ENCODE measurements at regions of chr1 and their contacts with region 1.

Region 1: DNA sequence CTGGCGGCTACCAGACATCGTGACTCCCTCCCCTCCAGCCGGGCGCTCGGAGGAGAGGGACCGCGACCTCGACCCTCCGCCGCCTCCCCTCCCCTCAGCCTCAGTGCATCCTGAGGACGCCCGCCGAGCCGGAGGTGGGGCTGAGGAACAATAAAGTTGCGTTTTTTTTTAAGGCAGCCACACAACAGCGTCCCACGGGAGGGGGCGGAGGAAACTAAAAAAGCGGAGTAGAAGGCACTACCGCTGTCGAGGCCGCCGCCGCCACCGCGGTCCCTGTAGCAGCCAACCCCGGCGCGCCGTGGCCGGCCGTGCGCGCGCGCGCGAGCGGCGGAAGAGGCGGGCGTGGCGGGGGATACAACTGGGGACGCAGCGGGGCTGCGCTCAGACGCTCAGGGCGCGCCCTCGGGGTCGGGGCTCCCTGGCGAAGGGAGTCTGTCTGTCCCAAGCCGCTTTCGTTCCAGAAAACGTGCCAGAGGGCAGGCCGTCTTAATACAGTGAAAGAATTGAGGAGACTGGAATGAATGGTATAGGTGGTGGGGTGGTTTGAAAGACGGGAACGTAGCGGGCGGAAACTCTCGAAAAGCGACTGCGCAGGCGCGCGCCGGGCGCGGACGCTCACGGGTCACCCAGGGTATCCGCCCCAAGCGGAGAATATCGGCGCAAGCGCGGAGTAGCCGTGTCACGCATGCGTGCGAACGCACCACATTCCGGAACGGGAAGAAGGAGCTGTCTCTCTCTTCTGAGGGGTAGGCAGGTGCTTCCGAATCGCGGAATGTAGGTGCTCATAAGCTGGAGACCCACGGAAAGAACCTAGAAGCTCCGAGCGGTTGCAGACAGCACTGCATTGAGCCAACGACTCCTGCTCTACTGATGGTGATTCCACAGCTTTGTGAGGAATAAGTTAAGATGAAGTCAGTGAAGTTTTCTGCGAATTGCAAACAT is at the start of gene COP1:
- DNase-seq: peak; percentile 97
- H3K4me3 ChIP-seq: peak within 1 kb of the TSS; percentile 96
- H3K27ac ChIP-seq: peak within 1 kb of the TSS; percentile 89
- H3K4me1 ChIP-seq: peaks cover 16% of the 10 kb centered on the region
- H3K27me3 ChIP-seq: no peaks in the 10 kb centered on the region
- CTCF ChIP-seq: no peak
- total RNA-seq, gene COP1: 35.8 and 37.5 TPM in 2 replicates

Region 2: GRCh38 chr1:176066709-176067108 is 140.5 kb before region 1 on chr1:
- CTCF ChIA-PET with region 1: no interaction called
- POLR2A ChIA-PET with region 1: no interaction called
- intact Hi-C with region 1: loop called (anchors 10 kb)
- DNase-seq: no peak
- H3K4me3 ChIP-seq: no peak overlapping the region
- H3K27ac ChIP-seq: no peak overlapping the region
- H3K4me1 ChIP-seq: no peaks in the 10 kb centered on the region
- H3K27me3 ChIP-seq: no peaks in the 10 kb centered on the region
- CTCF ChIP-seq: no peak

Region 3: GRCh38 chr1:176119549-176119948 is 87.7 kb before region 1 on chr1:
- CTCF ChIA-PET with region 1: no interaction called
- POLR2A ChIA-PET with region 1: no interaction called
- intact Hi-C with region 1: loop called (anchors 2 kb)
- DNase-seq: peak; percentile 33
- H3K4me3 ChIP-seq: no peak overlapping the region
- H3K27ac ChIP-seq: no peak overlapping the region
- H3K4me1 ChIP-seq: no peaks in the 10 kb centered on the region
- H3K27me3 ChIP-seq: no peaks in the 10 kb centered on the region
- CTCF ChIP-seq: peak; percentile 63

Region 4: GRCh38 chr1:176149939-176150807 is 57.1 kb before region 1 on chr1:
- CTCF ChIA-PET with region 1: no interaction called
- POLR2A ChIA-PET with region 1: no interaction called
- intact Hi-C with region 1: no loop called
- DNase-seq: no peak
- H3K4me3 ChIP-seq: no peak overlapping the region
- H3K27ac ChIP-seq: no peak overlapping the region
- H3K4me1 ChIP-seq: no peaks in the 10 kb centered on the region
- H3K27me3 ChIP-seq: no peaks in the 10 kb centered on the region
- CTCF ChIP-seq: no peak

Region 5: GRCh38 chr1:176609551-176610408 is 402.5 kb after region 1 on chr1:
- CTCF ChIA-PET with region 1: no interaction called
- POLR2A ChIA-PET with region 1: no interaction called
- intact Hi-C with region 1: no loop called
- DNase-seq: no peak
- H3K4me3 ChIP-seq: no peak overlapping the region
- H3K27ac ChIP-seq: no peak overlapping the region
- H3K4me1 ChIP-seq: no peaks in the 10 kb centered on the region
- H3K27me3 ChIP-seq: peaks cover 5% of the 10 kb centered on the region
- CTCF ChIP-seq: no peak

Measured in A673 (cell line).